Activated B cell treated with CpG ODN at 0.5 μM for 24 hours (primary cell): ENCODE measurements at regions of chr2 and their contacts with region 1.

Region 1: GRCh38 chr2:202265467-202266277 is at the start of gene NOP58:
- DNase-seq: peak; percentile 78
- ATAC-seq: peak; percentile 87
- H3K4me3 Mint-ChIP-seq: peak within 1 kb of the TSS; percentile 38
- H3K27ac Mint-ChIP-seq: no peak within 1 kb of the TSS
- H3K4me1 Mint-ChIP-seq: peaks cover 30% of the 10 kb centered on the region
- H3K27me3 Mint-ChIP-seq: no peaks in the 10 kb centered on the region
- CTCF ChIP-seq: no peak
- total RNA-seq, gene NOP58: 141 and 153 TPM in 2 replicates

Region 2: DNA sequence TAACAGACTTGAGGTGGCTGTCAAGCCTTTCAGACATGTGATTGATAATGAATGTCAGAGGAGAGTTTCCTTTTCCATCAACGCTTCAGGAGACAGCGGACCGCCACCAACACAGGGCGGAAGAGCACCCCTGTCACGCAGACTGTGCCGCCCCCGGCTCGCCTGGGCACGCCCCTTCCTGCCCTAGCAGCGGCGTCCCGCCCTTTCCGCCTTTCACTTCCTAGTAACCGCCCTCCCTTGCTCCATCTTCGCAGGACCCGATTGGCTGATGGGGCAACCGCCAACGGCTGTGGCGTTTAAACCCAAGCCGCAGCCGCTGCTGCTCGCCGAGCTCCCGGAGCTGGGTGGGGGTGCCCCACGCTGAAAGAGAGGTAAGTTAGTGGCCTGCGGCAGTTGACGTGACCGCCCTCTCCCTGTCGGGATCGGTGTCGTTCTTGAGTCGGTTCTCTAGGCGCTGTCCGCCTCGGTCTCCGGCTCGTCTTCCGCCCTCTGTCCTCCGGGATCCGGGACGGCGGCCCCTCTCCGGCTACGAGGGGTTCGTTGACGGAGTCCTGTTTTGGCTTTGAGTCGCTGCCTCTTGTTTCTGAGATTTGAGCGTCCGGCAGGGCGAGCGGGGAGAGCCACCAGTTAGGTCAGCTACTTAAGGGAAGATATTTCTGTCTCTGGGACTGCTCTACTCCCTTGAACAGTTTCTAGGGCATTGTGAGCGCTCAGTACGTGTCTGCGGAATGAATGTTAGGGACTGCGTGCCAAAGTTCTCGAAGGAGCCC is 1739.6 kb before region 1 on chr2 and contains the start of gene SGO2:
- CTCF ChIA-PET with region 1: no interaction called
- POLR2A ChIA-PET with region 1: no interaction called
- intact Hi-C with region 1: loop called (anchors 5 kb)
- DNase-seq: peak; percentile 90
- ATAC-seq: peak; percentile 100
- H3K4me3 Mint-ChIP-seq: peak within 1 kb of the TSS; percentile 95
- H3K27ac Mint-ChIP-seq: peak within 1 kb of the TSS; percentile 80
- H3K4me1 Mint-ChIP-seq: peaks cover 14% of the 10 kb centered on the region
- H3K27me3 Mint-ChIP-seq: peaks cover 5% of the 10 kb centered on the region
- CTCF ChIP-seq: no peak
- total RNA-seq, gene SGO2: 3.3 and 3.8 TPM in 2 replicates

Region 3: DNA sequence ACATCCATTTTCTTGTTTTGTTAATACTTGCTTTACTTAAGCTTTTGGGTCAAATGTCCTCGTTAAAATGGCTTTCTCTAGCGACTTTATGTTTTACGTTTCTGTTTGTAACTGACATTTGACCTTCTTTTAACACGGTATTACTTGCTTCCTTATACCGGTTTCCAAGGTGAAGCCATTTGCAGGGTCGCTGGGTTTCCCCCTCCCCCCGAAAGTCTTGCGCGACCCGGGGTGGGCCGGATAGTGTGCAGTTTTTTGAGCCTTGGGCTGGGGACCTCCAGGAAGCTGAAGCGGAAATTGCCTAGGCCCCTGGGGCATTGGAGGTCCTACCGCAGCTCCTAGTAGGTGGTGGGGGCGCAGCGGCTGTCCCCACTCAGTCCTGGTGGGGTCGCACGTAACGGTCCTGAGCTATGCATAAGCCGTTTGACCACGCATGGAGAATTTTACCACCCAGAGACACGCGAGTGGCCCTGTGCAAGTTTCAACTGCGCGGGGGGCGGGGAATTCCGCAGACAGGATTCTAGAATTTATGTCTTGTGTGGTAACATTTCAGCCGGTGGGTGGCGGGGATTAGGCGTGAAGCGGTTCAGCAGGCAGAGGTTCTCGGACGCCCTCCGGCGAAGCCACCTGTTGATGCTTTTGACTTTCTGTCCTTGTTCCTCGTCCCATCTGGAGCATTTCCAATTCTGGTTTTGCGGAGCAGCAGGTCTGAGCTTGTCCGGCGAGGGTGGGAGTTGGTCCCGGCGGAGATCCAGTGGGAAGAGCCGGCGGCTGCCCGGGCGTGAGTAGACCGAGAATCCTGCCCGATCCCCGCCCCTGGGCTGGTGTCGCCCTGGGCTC is 1147.3 kb before region 1 on chr2:
- CTCF ChIA-PET with region 1: no interaction called
- POLR2A ChIA-PET with region 1: no interaction called
- intact Hi-C with region 1: loop called (anchors 2 kb)
- DNase-seq: peak; percentile 78
- ATAC-seq: peak; percentile 70
- H3K4me3 Mint-ChIP-seq: peak overlapping the region; percentile 100
- H3K27ac Mint-ChIP-seq: peak overlapping the region; percentile 99
- H3K4me1 Mint-ChIP-seq: peaks cover 77% of the 10 kb centered on the region
- H3K27me3 Mint-ChIP-seq: no peaks in the 10 kb centered on the region
- CTCF ChIP-seq: no peak

Region 4: GRCh38 chr2:201642579-201643215 is 623.0 kb before region 1 on chr2:
- CTCF ChIA-PET with region 1: no interaction called
- POLR2A ChIA-PET with region 1: interaction called, 11 read pairs
- intact Hi-C with region 1: loop called (anchors 5 kb)
- DNase-seq: peak; percentile 91
- ATAC-seq: peak; percentile 86
- H3K4me3 Mint-ChIP-seq: peak overlapping the region; percentile 95
- H3K27ac Mint-ChIP-seq: peak overlapping the region; percentile 91
- H3K4me1 Mint-ChIP-seq: peaks cover 9% of the 10 kb centered on the region
- H3K27me3 Mint-ChIP-seq: no peaks in the 10 kb centered on the region
- CTCF ChIP-seq: no peak

Region 5: GRCh38 chr2:201984800-201985525 is 280.7 kb before region 1 on chr2:
- CTCF ChIA-PET with region 1: no interaction called
- POLR2A ChIA-PET with region 1: no interaction called
- intact Hi-C with region 1: no loop called
- DNase-seq: no peak
- ATAC-seq: no peak
- H3K4me3 Mint-ChIP-seq: no peak overlapping the region
- H3K27ac Mint-ChIP-seq: no peak overlapping the region
- H3K4me1 Mint-ChIP-seq: no peaks in the 10 kb centered on the region
- H3K27me3 Mint-ChIP-seq: peaks cover 10% of the 10 kb centered on the region
- CTCF ChIP-seq: no peak

Region 6: DNA sequence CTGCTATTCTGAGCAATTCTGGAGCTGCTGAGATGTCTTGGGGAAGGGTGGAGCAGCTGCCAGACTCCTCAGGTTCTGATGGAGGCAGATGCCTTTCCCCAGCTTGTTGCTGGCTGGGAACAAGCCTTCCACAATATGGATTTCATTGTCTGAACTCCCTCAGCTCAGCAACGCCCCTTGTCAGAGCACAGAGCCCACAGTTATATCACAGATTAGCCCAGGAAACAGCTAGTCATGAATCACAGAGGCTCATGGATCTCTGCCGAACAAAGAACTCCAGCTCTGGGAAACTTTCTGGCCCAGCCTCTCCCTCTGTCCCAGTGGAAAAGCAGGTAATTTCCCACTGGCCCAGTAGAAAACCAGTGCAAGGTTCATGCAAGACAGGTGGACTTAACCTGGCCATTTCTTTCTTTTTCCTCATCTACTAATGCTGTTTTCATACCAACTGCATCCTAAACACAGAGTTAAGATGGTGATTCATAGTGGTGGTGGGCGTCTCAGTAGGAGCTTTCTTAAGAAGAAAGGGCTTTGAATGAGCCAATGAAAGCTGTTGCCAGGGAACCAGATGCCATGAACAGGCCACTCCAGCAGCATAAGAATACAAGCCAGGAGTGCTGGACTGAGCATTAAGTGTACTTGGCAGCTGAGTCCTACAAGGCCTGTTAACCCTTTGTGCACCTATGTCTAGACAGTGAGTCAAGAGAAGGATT is 201.3 kb before region 1 on chr2:
- CTCF ChIA-PET with region 1: no interaction called
- POLR2A ChIA-PET with region 1: no interaction called
- intact Hi-C with region 1: no loop called
- DNase-seq: no peak
- ATAC-seq: no peak
- H3K4me3 Mint-ChIP-seq: no peak overlapping the region
- H3K27ac Mint-ChIP-seq: no peak overlapping the region
- H3K4me1 Mint-ChIP-seq: no peaks in the 10 kb centered on the region
- H3K27me3 Mint-ChIP-seq: peaks cover 8% of the 10 kb centered on the region
- CTCF ChIP-seq: no peak

Region 7: DNA sequence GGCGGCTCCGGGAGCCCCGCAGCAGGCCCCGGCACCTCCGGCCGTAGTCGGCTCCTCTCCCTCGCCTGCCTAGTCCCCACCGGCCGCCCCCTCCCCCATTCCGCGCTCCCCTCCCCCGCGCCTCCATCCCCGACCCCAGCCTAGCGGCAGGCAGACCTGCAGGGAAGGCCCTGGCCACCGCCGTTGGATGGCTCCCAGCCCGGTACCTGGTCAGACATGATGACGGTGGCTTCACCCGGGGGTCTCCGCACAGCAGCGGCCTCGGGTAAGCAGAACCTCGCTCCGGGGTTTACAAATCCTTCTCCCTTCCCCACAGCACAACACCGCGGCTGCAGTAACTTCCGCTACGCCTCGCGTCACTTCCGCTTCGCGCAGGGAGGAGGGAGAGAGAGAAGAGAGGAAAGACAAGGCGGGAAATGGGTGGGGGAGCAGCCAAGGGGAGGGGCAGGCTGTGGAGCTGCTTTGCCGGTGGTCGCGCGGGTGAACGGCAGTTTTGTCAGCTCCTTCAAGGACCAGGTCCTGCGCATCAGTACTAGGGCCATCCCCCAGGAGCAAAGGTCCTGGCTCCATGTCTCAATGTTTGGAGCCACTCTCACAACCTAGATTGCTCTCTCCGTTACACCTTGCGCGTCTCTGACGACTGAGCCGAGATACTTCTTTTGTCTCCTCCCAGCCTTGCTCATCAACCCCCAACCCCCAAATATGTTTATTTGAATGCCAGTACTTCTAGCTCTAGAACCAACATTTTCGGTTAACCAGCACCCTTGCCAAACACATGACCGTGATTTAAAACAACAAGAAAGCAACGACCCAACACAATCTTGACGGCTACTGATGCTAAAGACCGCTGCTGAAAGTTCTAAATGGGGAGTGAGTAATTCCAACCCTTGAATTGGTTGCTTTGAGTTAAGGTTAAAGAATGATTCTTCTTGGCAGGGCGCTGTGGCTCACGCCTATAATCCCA is 27.2 kb before region 1 on chr2 and contains the start of gene SUMO1:
- CTCF ChIA-PET with region 1: interaction called, 5 read pairs
- POLR2A ChIA-PET with region 1: interaction called, 11 read pairs
- intact Hi-C with region 1: loop called (anchors 1 kb)
- DNase-seq: peak; percentile 86
- ATAC-seq: peak; percentile 94
- H3K4me3 Mint-ChIP-seq: peak within 1 kb of the TSS; percentile 100
- H3K27ac Mint-ChIP-seq: peak within 1 kb of the TSS; percentile 93
- H3K4me1 Mint-ChIP-seq: peaks cover 36% of the 10 kb centered on the region
- H3K27me3 Mint-ChIP-seq: no peaks in the 10 kb centered on the region
- CTCF ChIP-seq: no peak
- total RNA-seq, gene SUMO1: 78.8 and 83.9 TPM in 2 replicates

Region 8: DNA sequence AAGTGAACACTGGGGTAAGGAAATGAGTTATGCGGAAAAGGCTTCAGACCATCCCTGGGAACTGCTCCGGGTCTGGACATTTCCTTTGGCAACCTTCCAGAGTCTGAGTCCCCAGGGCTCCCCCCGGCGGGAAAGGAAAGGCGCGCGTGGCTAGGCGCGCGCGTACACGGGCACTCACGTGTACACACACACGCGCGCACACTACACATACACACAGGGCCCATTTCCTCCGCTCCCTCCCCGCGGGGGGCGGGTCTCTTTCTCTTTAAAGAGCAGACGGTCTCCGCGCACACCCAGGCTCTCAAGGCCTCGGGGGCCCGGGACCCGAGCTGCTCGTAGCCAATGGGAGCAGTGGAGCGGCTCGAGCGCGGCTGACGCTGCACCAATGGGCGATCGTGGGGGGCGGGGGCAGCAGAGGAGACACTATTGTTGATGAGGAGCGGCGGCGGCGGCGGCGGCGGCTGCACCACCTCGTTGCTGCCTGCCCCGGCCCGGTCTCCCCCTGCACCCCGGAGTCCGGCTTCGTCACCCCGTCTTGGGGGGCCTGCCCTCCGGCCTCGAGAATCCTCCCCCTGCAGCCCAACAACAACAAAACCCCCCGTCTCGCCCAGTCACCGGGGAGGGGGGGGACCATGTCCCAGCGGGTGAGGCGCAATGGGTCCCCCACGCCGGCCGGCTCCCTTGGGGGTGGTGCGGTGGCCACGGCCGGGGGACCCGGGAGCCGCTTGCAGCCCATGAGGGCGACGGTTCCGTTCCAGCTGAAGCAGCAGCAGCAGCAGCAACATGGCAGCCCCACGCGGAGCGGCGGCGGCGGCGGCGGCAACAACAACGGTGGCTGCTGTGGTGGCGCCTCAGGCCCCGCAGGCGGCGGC is 369.1 kb after region 1 on chr2 and contains the start of gene FAM117B:
- CTCF ChIA-PET with region 1: no interaction called
- POLR2A ChIA-PET with region 1: interaction called, 4 read pairs
- intact Hi-C with region 1: loop called (anchors 5 kb)
- DNase-seq: peak; percentile 92
- ATAC-seq: peak; percentile 88
- H3K4me3 Mint-ChIP-seq: peak within 1 kb of the TSS; percentile 95
- H3K27ac Mint-ChIP-seq: peak within 1 kb of the TSS; percentile 100
- H3K4me1 Mint-ChIP-seq: peaks cover 53% of the 10 kb centered on the region
- H3K27me3 Mint-ChIP-seq: no peaks in the 10 kb centered on the region
- CTCF ChIP-seq: no peak
- total RNA-seq, gene FAM117B: 21.3 and 22.5 TPM in 2 replicates